ENCODE measurements at regions of chr1 and their contacts with region 1.

Region 1: GRCh38 chr1:25895365-25895993 is 10.7 kb downstream of the STMN1 start:
- DNase-seq: peak; percentile 95
- H3K4me3 ChIP-seq: no peak overlapping the region
- H3K27ac ChIP-seq: peak overlapping the region; percentile 4
- H3K4me1 ChIP-seq: peaks cover 12% of the 10 kb centered on the region
- H3K27me3 ChIP-seq: no peaks in the 10 kb centered on the region
- CTCF ChIP-seq: peak; percentile 98 to 99
- POLR2A ChIP-seq: no peak

Region 2: GRCh38 chr1:25905680-25906643 is 10.5 kb after region 1 on chr1 and contains the start of gene STMN1:
- CTCF ChIA-PET with region 1: interaction called, 44 read pairs
- POLR2A ChIA-PET with region 1: interaction called, 20 read pairs
- dilution Hi-C with region 1: no loop called
- intact Hi-C with region 1: loop called (anchors 1 kb)
- DNase-seq: peak; percentile 93
- H3K4me3 ChIP-seq: peak within 1 kb of the TSS; percentile 73 to 96 (median 88)
- H3K27ac ChIP-seq: peak within 1 kb of the TSS; percentile 71
- H3K4me1 ChIP-seq: peaks cover 17% of the 10 kb centered on the region
- H3K27me3 ChIP-seq: peaks cover 3 to 4% of the 10 kb centered on the region in 2 experiments
- CTCF ChIP-seq: no peak
- POLR2A ChIP-seq: peak; percentile 98
- total RNA-seq, gene STMN1: 491 and 503 TPM in 2 replicates

Region 3: GRCh38 chr1:25967308-25967707 is 71.8 kb after region 1 on chr1:
- CTCF ChIA-PET with region 1: interaction called, 12 read pairs
- POLR2A ChIA-PET with region 1: no interaction called
- dilution Hi-C with region 1: no loop called
- intact Hi-C with region 1: no loop called
- DNase-seq: no peak
- H3K4me3 ChIP-seq: no peak overlapping the region
- H3K27ac ChIP-seq: no peak overlapping the region
- H3K4me1 ChIP-seq: no peaks in the 10 kb centered on the region
- H3K27me3 ChIP-seq: no peaks in the 10 kb centered on the region
- CTCF ChIP-seq: no peak
- POLR2A ChIP-seq: no peak

Region 4: DNA sequence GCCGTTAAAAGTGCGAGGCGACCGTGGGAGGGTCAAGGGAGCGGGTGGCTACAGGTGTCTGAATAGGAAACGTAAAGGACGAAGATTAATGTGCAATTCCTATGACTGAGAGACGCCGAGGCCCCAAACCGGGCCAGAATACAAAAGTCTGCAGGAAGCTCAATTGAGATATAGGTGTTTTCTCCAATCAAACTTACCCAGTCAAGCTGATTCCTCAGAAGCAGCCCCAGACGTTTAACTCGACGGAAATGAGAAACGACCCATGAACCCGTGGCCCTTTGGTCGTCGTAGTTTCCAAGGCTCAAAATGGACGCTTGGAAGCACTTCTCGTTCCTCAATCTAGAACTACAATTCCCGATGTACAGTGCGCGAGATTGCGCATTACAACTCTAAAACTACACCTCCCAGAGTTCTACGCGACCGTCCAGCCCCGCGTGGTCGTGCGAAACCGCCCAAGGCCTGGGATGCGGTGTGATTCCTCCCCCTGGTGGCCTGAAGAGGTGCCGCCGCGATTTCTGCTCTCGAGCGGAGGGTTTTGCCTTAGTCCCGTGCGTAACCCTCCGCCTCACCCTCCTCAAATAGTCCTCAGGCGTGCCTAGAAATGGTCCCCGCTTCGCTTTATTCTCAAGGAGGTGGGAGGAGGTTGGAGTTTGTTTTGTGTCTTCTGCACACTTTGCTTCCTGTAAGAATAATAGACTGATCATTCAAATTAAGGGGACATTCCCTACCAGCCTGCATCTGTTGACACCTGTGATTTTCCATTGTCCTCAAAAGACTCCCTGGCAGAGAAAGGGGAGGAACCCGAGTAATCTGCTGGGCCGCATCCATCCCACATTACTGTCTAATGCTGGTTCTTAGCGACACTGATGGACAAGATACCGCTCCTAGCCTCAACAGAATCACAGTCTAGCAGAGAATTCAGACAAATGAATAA is 102.6 kb after region 1 on chr1 and contains the start of gene PAFAH2:
- CTCF ChIA-PET with region 1: interaction called, 404 read pairs
- POLR2A ChIA-PET with region 1: interaction called, 14 read pairs
- dilution Hi-C with region 1: loop called (anchors 25 kb)
- intact Hi-C with region 1: loop called (anchors 1 kb)
- DNase-seq: peak; percentile 100
- H3K4me3 ChIP-seq: peak within 1 kb of the TSS; percentile 41 to 83 (median 68)
- H3K27ac ChIP-seq: peak within 1 kb of the TSS; percentile 57
- H3K4me1 ChIP-seq: peaks cover 16% of the 10 kb centered on the region
- H3K27me3 ChIP-seq: no peaks in the 10 kb centered on the region
- CTCF ChIP-seq: peak; percentile 96 to 99
- POLR2A ChIP-seq: peak; percentile 87
- total RNA-seq, gene PAFAH2: 5.0 and 6.9 TPM in 2 replicates

Region 5: DNA sequence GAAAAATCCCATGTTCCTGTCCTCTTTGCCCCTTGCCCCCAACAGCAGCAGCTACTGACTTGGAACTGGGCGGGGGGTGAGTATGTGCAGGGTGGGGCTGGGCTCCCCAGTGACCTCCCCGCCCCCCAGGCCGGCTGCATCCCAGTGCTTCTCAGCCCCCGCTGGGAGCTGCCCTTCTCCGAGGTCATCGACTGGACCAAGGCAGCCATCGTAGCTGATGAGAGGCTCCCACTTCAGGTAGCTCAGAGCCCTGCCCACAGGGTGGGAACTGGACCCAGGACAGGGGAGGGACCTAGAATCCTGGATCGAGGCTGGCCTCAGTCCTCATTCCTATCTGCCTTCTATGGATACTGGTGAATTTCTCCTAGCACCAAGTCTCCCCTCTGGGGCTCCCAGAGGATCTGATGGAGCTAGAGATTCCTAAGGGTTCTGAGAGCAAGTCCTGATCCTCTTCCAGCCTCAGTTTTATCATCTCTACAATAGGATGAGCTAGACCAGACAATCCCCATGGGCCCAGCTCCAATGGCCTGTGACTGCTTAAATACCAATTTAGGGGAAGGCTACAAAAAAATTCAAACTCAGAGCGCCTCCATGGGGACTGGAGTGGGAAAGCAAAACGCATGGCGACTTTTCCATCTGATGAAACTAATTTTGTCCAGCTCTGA is 134.1 kb after region 1 on chr1:
- CTCF ChIA-PET with region 1: interaction called, 25 read pairs
- POLR2A ChIA-PET with region 1: no interaction called
- dilution Hi-C with region 1: no loop called
- intact Hi-C with region 1: no loop called
- DNase-seq: no peak
- H3K4me3 ChIP-seq: no peak overlapping the region
- H3K27ac ChIP-seq: no peak overlapping the region
- H3K4me1 ChIP-seq: peaks cover under 1% of the 10 kb centered on the region
- H3K27me3 ChIP-seq: peaks cover 0 to 3% of the 10 kb centered on the region in 2 experiments
- CTCF ChIP-seq: no peak
- POLR2A ChIP-seq: no peak

Region 6: DNA sequence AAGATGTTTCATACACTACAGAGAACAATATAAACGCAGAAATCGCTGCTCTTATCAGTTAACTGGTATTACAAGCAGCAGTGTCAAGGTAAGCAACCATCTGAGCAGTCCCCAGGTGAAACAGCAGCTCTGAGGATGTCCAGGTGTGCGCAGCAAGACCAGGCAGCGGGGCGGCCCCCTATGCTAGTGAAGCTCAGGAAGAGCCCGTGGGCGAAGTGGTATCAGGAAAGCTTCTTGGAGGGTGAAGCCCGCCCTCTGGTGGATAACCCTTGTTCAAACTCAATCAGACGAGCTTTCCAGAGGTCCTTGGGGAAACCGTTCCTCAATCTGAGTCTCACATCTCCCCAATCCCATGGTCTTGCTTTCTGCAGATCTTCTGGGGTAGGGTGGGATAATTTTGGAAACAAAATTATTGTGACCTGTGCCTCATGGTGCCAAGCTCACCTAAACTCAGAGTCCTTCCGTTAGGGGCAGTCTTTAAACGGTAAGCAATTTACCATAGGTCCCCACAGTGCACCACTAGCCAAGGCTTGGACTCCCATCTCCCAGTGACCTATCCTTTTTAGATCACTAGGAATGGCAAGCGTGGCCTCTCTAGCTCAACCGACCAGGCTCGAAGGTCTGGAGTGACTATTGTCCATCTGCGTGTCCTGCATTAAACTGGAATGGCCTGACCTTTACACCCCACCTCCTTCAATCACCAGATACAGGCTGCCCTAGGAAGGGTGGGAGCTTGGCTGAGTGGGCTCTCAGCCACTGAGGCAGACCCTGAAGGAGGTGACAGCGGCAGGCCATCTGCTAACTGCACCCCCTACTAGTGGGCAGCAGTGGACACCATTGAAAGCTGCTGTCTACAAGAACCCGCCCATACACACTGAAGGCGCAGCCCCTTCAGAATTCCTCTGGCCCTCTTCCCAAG is 249.8 kb after region 1 on chr1:
- CTCF ChIA-PET with region 1: interaction called, 25 read pairs
- POLR2A ChIA-PET with region 1: no interaction called
- dilution Hi-C with region 1: no loop called
- intact Hi-C with region 1: loop called (anchors 10 kb)
- DNase-seq: peak; percentile 76
- H3K4me3 ChIP-seq: no peak overlapping the region
- H3K27ac ChIP-seq: no peak overlapping the region
- H3K4me1 ChIP-seq: no peaks in the 10 kb centered on the region
- H3K27me3 ChIP-seq: no peaks in the 10 kb centered on the region
- CTCF ChIP-seq: peak; percentile 66 to 83
- POLR2A ChIP-seq: no peak

Region 7: GRCh38 chr1:26189751-26190275 is 294.3 kb after region 1 on chr1:
- CTCF ChIA-PET with region 1: no interaction called
- POLR2A ChIA-PET with region 1: no interaction called
- dilution Hi-C with region 1: no loop called
- intact Hi-C with region 1: no loop called
- DNase-seq: no peak
- H3K4me3 ChIP-seq: no peak overlapping the region
- H3K27ac ChIP-seq: no peak overlapping the region
- H3K4me1 ChIP-seq: no peaks in the 10 kb centered on the region
- H3K27me3 ChIP-seq: peaks cover 0 to 5% of the 10 kb centered on the region in 2 experiments
- CTCF ChIP-seq: peak in 1 of 2 donors; percentile 9
- POLR2A ChIP-seq: no peak

Region 8: DNA sequence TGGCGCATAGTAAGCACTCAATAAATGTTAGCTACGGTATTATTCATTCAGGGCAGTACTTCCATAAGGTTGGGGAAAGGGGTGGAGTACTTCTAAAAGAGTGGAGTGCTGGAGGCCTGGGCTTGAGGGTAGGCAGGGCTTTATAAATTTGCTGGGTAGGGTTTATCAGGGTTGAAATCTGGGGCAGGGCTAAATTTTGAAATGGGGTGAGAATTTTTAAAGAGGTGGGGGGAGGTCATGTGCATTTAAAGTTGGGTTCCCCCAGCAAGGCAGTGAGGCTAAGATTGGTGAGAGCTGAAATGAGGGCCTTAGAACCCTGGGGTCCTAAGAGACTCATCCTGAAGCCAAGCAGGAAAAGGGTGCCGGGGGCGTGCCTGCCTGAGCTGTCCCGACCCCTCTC is 304.9 kb after region 1 on chr1:
- CTCF ChIA-PET with region 1: no interaction called
- POLR2A ChIA-PET with region 1: no interaction called
- dilution Hi-C with region 1: no loop called
- intact Hi-C with region 1: no loop called
- DNase-seq: no peak
- H3K4me3 ChIP-seq: no peak overlapping the region
- H3K27ac ChIP-seq: no peak overlapping the region
- H3K4me1 ChIP-seq: no peaks in the 10 kb centered on the region
- H3K27me3 ChIP-seq: peaks cover 0 to 7% of the 10 kb centered on the region in 2 experiments
- CTCF ChIP-seq: no peak
- POLR2A ChIP-seq: no peak

Measured in endothelial cell of umbilical vein (primary cell).